ENCODE measurements at regions of chr16 and their contacts with region 1.

Region 1: DNA sequence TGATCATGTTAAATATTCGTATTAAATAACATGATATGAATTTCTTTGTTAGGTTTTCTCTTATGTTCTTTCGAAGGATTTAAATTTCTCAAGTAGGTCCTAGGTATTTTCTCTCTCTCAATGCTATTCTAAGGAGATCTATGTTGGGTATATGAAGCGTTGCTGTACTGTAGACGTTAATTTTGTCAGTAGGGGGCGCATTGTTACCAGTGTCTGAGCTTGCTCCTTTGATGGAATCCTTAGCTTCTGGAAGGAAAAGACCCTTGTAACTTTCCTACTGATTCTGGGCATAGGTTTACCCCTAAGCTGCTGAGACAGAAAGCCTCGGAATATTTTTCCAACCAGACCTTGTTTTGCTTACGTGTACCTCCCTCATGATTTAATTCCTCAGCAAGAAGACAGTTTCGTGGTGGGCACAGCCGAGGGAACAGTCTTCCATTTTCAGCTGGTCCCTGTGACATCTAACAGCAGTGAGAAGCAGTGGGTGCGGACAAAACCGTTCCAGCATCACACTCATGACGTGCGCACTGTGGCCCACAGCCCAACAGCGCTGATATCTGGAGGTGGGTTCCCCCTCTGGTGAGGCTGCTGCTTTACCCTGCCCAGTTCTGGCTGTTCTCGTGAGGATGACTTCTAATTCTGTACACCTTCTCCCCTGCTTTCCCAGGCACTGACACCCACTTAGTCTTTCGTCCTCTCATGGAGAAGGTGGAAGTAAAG is 17.9 kb downstream of the UTP4 start:
- DNase-seq: peak in 1 of 2 donors; percentile 50
- ATAC-seq: peak; percentile 89

Region 2: DNA sequence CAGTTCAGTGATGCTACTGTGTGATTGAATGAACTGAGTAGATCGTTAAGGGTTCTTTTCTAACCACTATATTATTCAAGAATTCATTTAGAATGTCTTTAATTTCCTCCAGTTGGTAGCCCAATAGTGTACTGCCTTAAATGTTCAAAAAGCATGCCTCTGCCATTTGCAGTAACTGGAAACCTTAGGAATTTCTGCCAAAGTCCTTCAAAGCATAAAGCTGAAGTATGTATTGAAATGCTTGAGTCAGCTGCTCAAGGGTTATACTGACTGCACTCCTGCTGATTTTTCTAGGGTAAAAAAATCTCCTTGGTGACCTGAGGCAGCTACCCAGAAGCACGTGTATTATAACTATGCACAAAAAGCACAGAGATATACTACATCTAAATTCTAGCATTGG is 93.2 kb after region 1 on chr16:
- intact Hi-C with region 1: no loop called
- DNase-seq: no peak
- ATAC-seq: no peak

Region 3: DNA sequence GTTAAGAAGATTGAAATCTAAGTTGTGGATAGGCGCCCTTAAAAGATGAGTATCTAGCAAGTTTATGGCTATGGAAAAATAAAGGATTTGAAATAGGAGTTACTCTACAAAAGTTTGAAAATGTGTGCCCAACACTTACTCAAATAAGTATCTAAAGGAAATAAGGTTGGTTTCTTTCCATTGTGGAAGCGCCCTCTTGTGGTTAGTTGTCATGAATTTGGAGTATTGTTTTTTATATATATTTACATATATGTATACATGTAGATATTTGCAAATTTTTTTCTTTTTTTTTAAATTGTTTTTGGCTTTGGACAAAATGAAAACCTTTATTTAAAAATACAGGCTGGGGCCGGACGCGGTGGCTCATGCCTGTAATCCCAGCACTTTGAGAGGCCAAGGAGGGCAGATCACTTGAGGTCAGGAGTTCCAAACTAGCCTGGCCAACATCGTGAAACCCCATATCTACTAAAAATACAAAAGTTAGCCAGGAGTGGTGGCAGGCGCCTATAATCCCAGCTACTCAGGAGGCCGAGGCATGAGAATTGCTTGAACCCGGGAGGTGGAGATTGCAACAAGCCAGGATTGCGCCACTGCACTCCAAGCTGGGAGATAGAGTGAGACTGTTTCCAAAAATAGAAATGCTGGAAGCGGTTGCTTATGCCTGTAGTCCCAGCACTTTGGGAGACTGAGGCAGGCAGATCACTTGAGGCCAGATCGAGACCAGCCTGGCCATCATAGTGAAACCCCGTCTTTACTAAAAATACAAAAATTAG is 136.8 kb after region 1 on chr16:
- intact Hi-C with region 1: loop called in 1 of 2 experiments (anchors 2 kb)
- DNase-seq: peak in 1 of 2 donors; percentile 26
- ATAC-seq: peak; percentile 61

Measured in left colon (tissue), 2 donors.